ENCODE measurements at regions of chr19 and their contacts with region 1.

Region 1: DNA sequence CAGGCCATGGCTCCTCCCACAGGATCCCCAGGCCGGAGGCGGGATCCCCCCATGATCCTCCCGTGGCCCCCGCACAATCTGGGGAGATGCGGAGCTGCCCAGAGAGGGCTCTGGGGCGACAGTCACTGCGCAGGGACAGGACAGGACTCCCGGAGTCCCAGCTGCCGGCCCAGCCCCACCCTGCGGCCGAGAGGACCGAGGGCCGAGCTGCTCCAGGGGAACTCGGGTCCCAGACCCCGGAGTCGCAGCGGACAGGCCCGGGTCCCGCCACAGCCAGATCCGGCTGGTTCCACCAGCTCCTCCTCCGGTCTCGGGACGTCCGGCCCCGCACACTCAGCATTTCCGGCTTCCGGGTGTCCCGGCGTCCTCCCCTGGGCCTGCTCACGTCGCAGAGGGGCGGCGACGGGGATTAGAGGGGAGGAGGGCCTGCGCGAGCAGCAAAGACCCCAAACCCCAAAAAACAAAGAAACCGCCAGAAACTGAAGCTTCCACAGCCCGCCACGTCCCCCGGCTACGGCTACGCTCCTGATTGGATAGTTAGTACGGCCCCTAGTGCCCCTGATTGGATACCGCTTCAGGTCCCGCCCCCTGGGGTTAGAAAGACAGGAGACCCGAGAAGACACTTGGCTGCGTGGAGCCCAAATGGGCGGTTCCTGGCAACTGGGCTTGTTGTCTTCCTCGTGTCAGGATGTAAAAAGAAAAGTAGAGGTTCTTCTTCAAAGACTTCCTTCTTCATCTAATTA is 21.3 kb upstream of the OR10H1 start:
- DNase-seq: peak; percentile 90 to 99 (median 95)
- ATAC-seq: peak; percentile 87
- H3K4me3 ChIP-seq: peak overlapping the region; percentile 64 to 78
- H3K4me3 Mint-ChIP-seq: peak overlapping the region; percentile 91
- H3K27ac ChIP-seq: peak overlapping the region; percentile 96 to 97
- H3K27ac Mint-ChIP-seq: peak overlapping the region; percentile 98
- H3K4me1 ChIP-seq: peaks cover 22% of the 10 kb centered on the region
- H3K4me1 Mint-ChIP-seq: peaks cover 31% of the 10 kb centered on the region
- H3K27me3 ChIP-seq: no peaks in the 10 kb centered on the region
- H3K27me3 Mint-ChIP-seq: no peaks in the 10 kb centered on the region
- CTCF ChIP-seq: no peak

Region 2: GRCh38 chr19:15332311-15332996 is 504.3 kb before region 1 on chr19 and contains the start of gene BRD4:
- CTCF ChIA-PET with region 1: no interaction called
- POLR2A ChIA-PET with region 1: no interaction called
- intact Hi-C with region 1: loop called in 1 of 2 experiments (anchors 5 kb)
- DNase-seq: peak; percentile 58 to 88 (median 77)
- ATAC-seq: peak; percentile 63
- H3K4me3 ChIP-seq: peak within 1 kb of the TSS; percentile 81 to 97
- H3K4me3 Mint-ChIP-seq: peak within 1 kb of the TSS; percentile 95
- H3K27ac ChIP-seq: peak within 1 kb of the TSS; percentile 71 to 83
- H3K27ac Mint-ChIP-seq: peak within 1 kb of the TSS; percentile 96
- H3K4me1 ChIP-seq: peaks cover 42% of the 10 kb centered on the region
- H3K4me1 Mint-ChIP-seq: peaks cover 42% of the 10 kb centered on the region
- H3K27me3 ChIP-seq: no peaks in the 10 kb centered on the region
- H3K27me3 Mint-ChIP-seq: no peaks in the 10 kb centered on the region
- CTCF ChIP-seq: no peak
- total RNA-seq, gene BRD4: 123 to 128 TPM

Region 3: DNA sequence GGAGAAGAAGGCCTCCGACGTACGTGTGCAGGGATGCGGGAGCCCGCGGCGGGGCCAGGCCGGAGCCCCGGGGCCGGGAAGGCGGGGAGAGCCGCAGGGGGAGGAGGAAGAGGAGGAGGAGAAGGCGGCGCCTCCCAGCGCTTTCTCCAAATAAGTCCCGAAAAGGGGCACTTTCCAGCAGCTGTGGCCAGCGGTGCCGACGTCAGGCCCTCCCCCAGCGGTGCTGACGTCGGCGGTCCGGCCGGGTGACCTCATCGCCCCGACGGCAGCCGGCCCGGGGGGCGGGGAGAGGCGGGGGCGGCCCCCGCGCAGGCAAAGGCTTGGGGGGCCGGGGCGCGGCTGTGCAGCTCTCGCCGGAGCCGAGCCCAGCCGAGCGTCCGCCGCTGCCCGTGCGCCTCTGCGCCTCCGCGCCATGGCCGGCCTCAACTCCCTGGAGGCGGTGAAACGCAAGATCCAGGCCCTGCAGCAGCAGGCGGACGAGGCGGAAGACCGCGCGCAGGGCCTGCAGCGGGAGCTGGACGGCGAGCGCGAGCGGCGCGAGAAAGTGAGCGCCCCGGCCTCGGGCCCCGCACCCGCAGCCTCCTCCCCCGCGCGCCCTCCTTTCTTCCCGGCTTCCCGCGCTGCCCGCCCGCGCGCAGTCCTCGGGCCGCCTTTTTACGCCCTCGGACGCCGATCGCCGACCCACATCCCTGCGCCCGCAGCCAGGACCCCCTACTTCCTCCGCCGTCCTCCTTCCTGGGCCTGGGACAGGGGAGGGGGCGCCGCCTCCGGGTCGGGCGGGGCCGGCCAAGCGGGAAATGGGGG is 239.6 kb after region 1 on chr19 and contains the start of gene TPM4:
- CTCF ChIA-PET with region 1: no interaction called
- POLR2A ChIA-PET with region 1: no interaction called
- intact Hi-C with region 1: loop called (anchors 2 to 5 kb)
- DNase-seq: peak; percentile 57 to 94 (median 81)
- ATAC-seq: peak; percentile 48
- H3K4me3 ChIP-seq: peak within 1 kb of the TSS; percentile 59 to 79
- H3K4me3 Mint-ChIP-seq: peak within 1 kb of the TSS; percentile 79
- H3K27ac ChIP-seq: peak within 1 kb of the TSS; percentile 64 to 92
- H3K27ac Mint-ChIP-seq: peak within 1 kb of the TSS; percentile 96
- H3K4me1 ChIP-seq: peaks cover 81% of the 10 kb centered on the region
- H3K4me1 Mint-ChIP-seq: peaks cover 74% of the 10 kb centered on the region
- H3K27me3 ChIP-seq: no peaks in the 10 kb centered on the region
- H3K27me3 Mint-ChIP-seq: no peaks in the 10 kb centered on the region
- CTCF ChIP-seq: no peak
- total RNA-seq, gene TPM4: 187 to 199 TPM

Region 4: GRCh38 chr19:16324384-16325160 is 487.8 kb after region 1 on chr19 and contains the start of gene KLF2:
- CTCF ChIA-PET with region 1: no interaction called
- POLR2A ChIA-PET with region 1: interaction called, 5 read pairs
- intact Hi-C with region 1: loop called in 1 of 2 experiments (anchors 5 kb)
- DNase-seq: peak; percentile 92 to 98 (median 97)
- ATAC-seq: peak; percentile 58
- H3K4me3 ChIP-seq: peak within 1 kb of the TSS; percentile 87 to 100
- H3K4me3 Mint-ChIP-seq: peak within 1 kb of the TSS; percentile 77
- H3K27ac ChIP-seq: peak within 1 kb of the TSS; percentile 94 to 99
- H3K27ac Mint-ChIP-seq: peak within 1 kb of the TSS; percentile 82
- H3K4me1 ChIP-seq: peaks cover 36% of the 10 kb centered on the region
- H3K4me1 Mint-ChIP-seq: peaks cover 40% of the 10 kb centered on the region
- H3K27me3 ChIP-seq: no peaks in the 10 kb centered on the region
- H3K27me3 Mint-ChIP-seq: no peaks in the 10 kb centered on the region
- CTCF ChIP-seq: no peak
- total RNA-seq, gene KLF2: 817 to 847 TPM

Region 5: GRCh38 chr19:16584248-16585141 is 747.7 kb after region 1 on chr19:
- CTCF ChIA-PET with region 1: no interaction called
- POLR2A ChIA-PET with region 1: no interaction called
- intact Hi-C with region 1: loop called in 1 of 2 experiments (anchors 5 kb)
- DNase-seq: peak; percentile 77 to 99 (median 90)
- ATAC-seq: peak; percentile 80
- H3K4me3 ChIP-seq: peak overlapping the region; percentile 23 to 30
- H3K4me3 Mint-ChIP-seq: peak overlapping the region; percentile 70
- H3K27ac ChIP-seq: peak overlapping the region; percentile 18 to 84
- H3K27ac Mint-ChIP-seq: peak overlapping the region; percentile 94
- H3K4me1 ChIP-seq: peaks cover 76% of the 10 kb centered on the region
- H3K4me1 Mint-ChIP-seq: peaks cover 79% of the 10 kb centered on the region
- H3K27me3 ChIP-seq: no peaks in the 10 kb centered on the region
- H3K27me3 Mint-ChIP-seq: no peaks in the 10 kb centered on the region
- CTCF ChIP-seq: no peak

Measured in CD8-positive, alpha-beta T cell (primary cell).